T-cell (primary cell): ENCODE measurements at regions of chr20 and their contacts with region 1.

Region 1: DNA sequence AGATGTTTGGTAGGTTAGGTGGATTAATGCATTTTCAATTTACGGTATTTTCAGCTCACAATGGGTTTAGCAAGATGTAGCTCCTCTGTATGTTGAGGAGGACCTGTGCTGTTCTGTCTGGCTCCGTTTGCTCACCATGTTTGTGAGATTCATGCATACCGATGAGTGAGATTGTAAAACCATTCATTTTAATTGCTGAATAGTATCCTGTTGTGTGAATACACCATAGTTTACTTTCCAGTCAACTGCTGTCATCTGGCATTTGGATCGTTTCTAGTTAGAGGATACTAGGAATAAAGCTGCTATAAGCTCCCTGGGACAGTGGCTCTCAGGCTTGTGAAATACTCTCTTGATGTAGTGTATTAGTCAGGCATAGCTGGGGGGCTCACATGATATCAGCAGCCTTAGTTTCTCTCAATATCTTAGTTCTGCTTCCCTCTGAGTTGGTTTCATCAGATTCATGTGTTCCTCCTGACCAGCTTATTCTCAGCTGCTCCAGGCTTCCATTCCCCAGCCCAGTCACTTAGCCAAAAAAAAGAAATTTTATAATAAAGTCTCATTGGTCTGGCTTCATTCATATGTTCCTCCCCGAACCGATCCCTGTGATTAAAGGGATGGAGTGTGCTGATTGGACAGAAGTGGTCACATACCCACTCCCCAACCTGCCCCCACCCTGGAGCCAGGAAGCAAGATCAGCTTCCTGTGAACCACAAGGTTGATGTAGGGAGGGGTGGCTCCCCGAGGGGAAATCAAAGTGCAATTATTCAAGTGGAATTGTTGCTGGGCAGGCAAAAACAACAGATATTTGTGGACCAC is 10.9 kb upstream of the B4GALT5 start:
- DNase-seq: peak in 8 of 35 experiments; percentile 5 to 16 (median 10)
- ATAC-seq: peak in 2 of 4 experiments; percentile 52 to 56
- H3K4me3 ChIP-seq: no peak overlapping the region
- H3K4me3 Mint-ChIP-seq: no peak overlapping the region
- H3K27ac ChIP-seq: no peak overlapping the region
- H3K27ac Mint-ChIP-seq: no peak overlapping the region
- H3K4me1 ChIP-seq: peaks cover 0 to 13% of the 10 kb centered on the region in 2 experiments
- H3K4me1 Mint-ChIP-seq: peaks cover 11 to 15% (median 11%) of the 10 kb centered on the region in 3 donors
- H3K27me3 ChIP-seq: peaks cover 0 to under 1% of the 10 kb centered on the region in 2 experiments
- H3K27me3 Mint-ChIP-seq: no peaks in the 10 kb centered on the region

Region 2: GRCh38 chr20:49768204-49769047 is 43.8 kb after region 1 on chr20:
- CTCF ChIA-PET with region 1: no interaction called
- POLR2A ChIA-PET with region 1: no interaction called
- DNase-seq: peak in 24 of 35 experiments; percentile 2 to 63 (median 12)
- ATAC-seq: peak; percentile 68 to 98 (median 84)
- H3K4me3 ChIP-seq: peak overlapping the region in 1 of 2 donors; percentile 11
- H3K4me3 Mint-ChIP-seq: peak overlapping the region in 1 of 3 donors; percentile 58
- H3K27ac ChIP-seq: no peak overlapping the region
- H3K27ac Mint-ChIP-seq: no peak overlapping the region
- H3K4me1 ChIP-seq: peaks cover 13 to 28% of the 10 kb centered on the region in 2 experiments
- H3K4me1 Mint-ChIP-seq: peaks cover 20 to 34% (median 29%) of the 10 kb centered on the region in 3 donors
- H3K27me3 ChIP-seq: peaks cover 4 to 30% of the 10 kb centered on the region in 2 experiments
- H3K27me3 Mint-ChIP-seq: peaks cover 44 to 62% of the 10 kb centered on the region in 2 donors

Region 3: GRCh38 chr20:49794336-49795138 is 69.9 kb after region 1 on chr20:
- CTCF ChIA-PET with region 1: no interaction called
- POLR2A ChIA-PET with region 1: no interaction called
- DNase-seq: peak in 3 of 35 experiments; percentile 22 to 38 (median 27)
- ATAC-seq: peak in 1 of 4 experiments; percentile 70
- H3K4me3 ChIP-seq: no peak overlapping the region
- H3K4me3 Mint-ChIP-seq: no peak overlapping the region
- H3K27ac ChIP-seq: no peak overlapping the region
- H3K27ac Mint-ChIP-seq: no peak overlapping the region
- H3K4me1 ChIP-seq: peaks cover 0 to 4% of the 10 kb centered on the region in 2 experiments
- H3K4me1 Mint-ChIP-seq: peaks cover 3 to 14% (median 11%) of the 10 kb centered on the region in 3 donors
- H3K27me3 ChIP-seq: peaks cover 0 to 16% of the 10 kb centered on the region in 2 experiments
- H3K27me3 Mint-ChIP-seq: peaks cover 15 to 19% of the 10 kb centered on the region in 2 donors

Region 4: DNA sequence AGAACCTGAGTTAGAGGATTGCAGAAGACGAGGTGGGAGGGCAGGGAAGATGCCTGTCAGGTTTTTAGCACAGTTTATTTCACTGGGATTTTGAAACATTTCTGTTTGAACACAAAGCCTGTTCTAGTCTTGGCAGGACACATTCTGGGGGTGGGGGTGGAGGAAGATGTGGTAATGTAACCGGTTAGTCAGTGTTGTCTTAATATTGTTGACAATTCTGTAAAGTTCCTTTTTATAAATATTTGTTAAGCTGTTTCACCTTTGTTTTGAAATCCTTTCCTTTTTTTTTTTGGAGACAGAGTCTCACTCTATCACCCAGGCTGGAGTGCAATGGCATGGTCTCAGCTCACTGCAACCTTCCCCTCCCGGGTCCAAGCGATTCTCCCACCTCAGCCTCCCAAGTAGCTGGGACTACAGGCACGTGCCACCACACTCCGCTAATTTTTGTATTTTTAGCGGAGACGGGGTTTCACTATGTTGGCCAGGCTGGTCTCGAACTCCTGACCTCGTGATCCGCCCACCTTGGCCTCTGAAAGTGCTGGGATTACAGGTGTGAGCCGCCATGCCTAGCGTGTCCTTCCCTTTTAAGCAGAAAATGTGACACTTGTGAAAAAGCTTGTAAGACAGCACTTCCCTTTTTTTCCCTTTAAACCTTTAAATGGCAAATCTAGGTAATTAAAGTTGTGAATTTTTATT is 108.2 kb after region 1 on chr20:
- CTCF ChIA-PET with region 1: no interaction called
- POLR2A ChIA-PET with region 1: no interaction called
- DNase-seq: no peak
- ATAC-seq: no peak
- H3K4me3 ChIP-seq: no peak overlapping the region
- H3K4me3 Mint-ChIP-seq: no peak overlapping the region
- H3K27ac ChIP-seq: no peak overlapping the region
- H3K27ac Mint-ChIP-seq: no peak overlapping the region
- H3K4me1 ChIP-seq: no peaks in the 10 kb centered on the region
- H3K4me1 Mint-ChIP-seq: peaks cover 3 to 10% (median 9%) of the 10 kb centered on the region in 3 donors
- H3K27me3 ChIP-seq: no peaks in the 10 kb centered on the region
- H3K27me3 Mint-ChIP-seq: no peaks in the 10 kb centered on the region

Region 5: GRCh38 chr20:51400051-51400926 is 1675.7 kb after region 1 on chr20:
- CTCF ChIA-PET with region 1: no interaction called
- POLR2A ChIA-PET with region 1: interaction called in 1 of 2 experiments, 12 read pairs
- DNase-seq: peak; percentile 39 to 86 (median 61)
- ATAC-seq: peak; percentile 70 to 77 (median 74)
- H3K4me3 ChIP-seq: peak overlapping the region; percentile 10 to 15
- H3K4me3 Mint-ChIP-seq: peak overlapping the region; percentile 64 to 82 (median 75)
- H3K27ac ChIP-seq: peak overlapping the region; percentile 97
- H3K27ac Mint-ChIP-seq: peak overlapping the region; percentile 98 to 99
- H3K4me1 ChIP-seq: peaks cover 23 to 87% of the 10 kb centered on the region in 2 experiments
- H3K4me1 Mint-ChIP-seq: peaks cover 64 to 73% (median 69%) of the 10 kb centered on the region in 3 donors
- H3K27me3 ChIP-seq: no peaks in the 10 kb centered on the region
- H3K27me3 Mint-ChIP-seq: no peaks in the 10 kb centered on the region